GM12878 (cell line): ENCODE measurements at regions of chr1 and their contacts with region 1.

Region 1: DNA sequence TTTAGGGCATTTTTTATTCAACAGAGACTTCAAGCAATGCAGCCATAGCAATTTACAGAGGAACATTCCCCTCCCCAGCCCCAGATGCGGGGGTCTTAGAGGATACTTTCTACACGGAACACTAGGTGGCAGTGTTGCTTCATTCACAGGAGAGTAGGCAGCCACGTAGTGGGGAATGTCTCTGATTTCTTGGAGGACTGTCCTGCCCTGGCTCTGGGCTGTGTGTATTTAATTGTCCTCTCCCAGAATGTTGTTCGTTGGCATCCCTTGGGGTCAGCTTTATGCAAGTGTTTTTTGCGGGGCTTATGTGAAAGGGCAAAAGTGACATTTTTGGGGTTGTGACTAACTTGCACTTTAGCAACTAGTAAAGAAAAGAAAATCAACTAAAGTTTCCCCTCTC is 96.9 kb downstream of the PAPPA2 start:
- DNase-seq: no peak
- ATAC-seq: peak; percentile 98
- H3K4me3 ChIP-seq: no peak overlapping the region
- H3K27ac ChIP-seq: no peak overlapping the region
- H3K4me1 ChIP-seq: no peaks in the 10 kb centered on the region
- H3K27me3 ChIP-seq: 0 out of 4 replicates have a peak, but pooled peaks cover 0 to 2% of the 10 kb centered on the region in 2 experiments
- CTCF ChIP-seq: peak; percentile 75 to 82 (median 75)
- EP300 ChIP-seq: no peak
- POLR2A ChIP-seq: no peak
- RAD21 ChIP-seq: peak; percentile 85

Region 2: GRCh38 chr1:176691251-176692228 is 131.7 kb after region 1 on chr1:
- CTCF ChIA-PET with region 1: interaction called, 67 read pairs
- POLR2A ChIA-PET with region 1: no interaction called
- RAD21 ChIA-PET with region 1: interaction called, 21 read pairs
- SMC1A ChIA-PET with region 1: interaction called, 25 read pairs
- in situ Hi-C with region 1: no loop called
- intact Hi-C with region 1: loop called (anchors 1 kb)
- DNase-seq: peak; percentile 17
- ATAC-seq: peak; percentile 94
- H3K4me3 ChIP-seq: no peak overlapping the region
- H3K27ac ChIP-seq: no peak overlapping the region
- H3K4me1 ChIP-seq: no peaks in the 10 kb centered on the region
- H3K27me3 ChIP-seq: no peaks in the 10 kb centered on the region; a peak in 1 of 4 replicates
- CTCF ChIP-seq: peak; percentile 69 to 73 (median 70); a peak in 5 of 6 replicates
- EP300 ChIP-seq: no peak
- POLR2A ChIP-seq: no peak
- RAD21 ChIP-seq: peak; percentile 61

Region 3: DNA sequence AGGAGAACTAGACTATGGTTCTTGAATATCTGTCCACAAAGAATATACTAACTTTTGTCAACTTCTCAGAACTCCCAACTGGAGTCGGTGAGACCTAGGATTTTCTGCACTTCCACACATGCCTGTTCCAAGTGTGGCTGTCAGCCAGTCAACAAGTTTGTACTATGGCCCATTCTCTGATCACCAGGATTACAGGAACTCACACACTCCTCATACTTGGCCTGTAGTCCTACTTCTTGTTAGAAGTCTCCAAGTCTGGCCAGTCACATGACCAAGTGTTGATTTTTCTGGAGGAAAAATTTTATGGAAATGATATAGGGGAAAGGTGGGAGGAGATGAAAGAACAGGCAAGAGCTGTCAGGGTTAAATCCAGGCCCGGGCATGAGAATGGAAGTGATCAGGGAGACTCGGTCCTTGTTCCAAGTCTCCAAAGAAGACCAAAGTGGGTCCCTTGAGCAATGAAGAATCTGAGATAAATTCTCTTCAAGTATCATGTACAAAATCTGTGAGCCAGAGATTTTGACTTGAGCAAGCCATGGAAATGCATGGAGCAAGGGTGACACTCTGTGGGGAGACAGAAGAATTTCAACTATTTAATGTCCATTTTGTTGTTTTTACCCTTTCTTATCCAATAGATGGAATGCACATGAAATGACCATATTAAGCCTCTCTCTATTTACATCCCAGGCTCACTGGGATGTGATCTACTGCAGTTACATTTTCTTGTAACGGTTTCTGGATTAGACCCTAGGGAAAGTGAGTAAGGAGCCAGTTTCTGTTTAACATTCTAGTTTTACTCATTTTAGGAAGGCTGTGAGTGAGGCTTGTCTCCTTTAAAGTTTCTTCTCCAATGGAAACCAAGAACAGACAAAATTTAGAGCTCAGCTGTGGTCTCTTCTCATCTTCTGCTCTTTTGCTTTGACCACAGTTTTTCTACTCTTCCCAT is 283.7 kb after region 1 on chr1:
- CTCF ChIA-PET with region 1: no interaction called
- POLR2A ChIA-PET with region 1: no interaction called
- RAD21 ChIA-PET with region 1: interaction called, 4 read pairs
- SMC1A ChIA-PET with region 1: interaction called, 4 read pairs
- in situ Hi-C with region 1: no loop called
- intact Hi-C with region 1: loop called (anchors 2 kb)
- DNase-seq: no peak
- ATAC-seq: no peak
- H3K4me3 ChIP-seq: no peak overlapping the region
- H3K27ac ChIP-seq: no peak overlapping the region
- H3K4me1 ChIP-seq: no peaks in the 10 kb centered on the region
- H3K27me3 ChIP-seq: 0 out of 4 replicates have a peak, but pooled peaks cover 0 to 2% of the 10 kb centered on the region in 2 experiments
- CTCF ChIP-seq: peak; percentile 19 to 48 (median 35); a peak in 4 of 6 replicates
- EP300 ChIP-seq: no peak
- POLR2A ChIP-seq: no peak
- RAD21 ChIP-seq: peak; percentile 64

Region 4: GRCh38 chr1:176880954-176881595 is 321.2 kb after region 1 on chr1:
- CTCF ChIA-PET with region 1: interaction called, 47 read pairs
- POLR2A ChIA-PET with region 1: no interaction called
- RAD21 ChIA-PET with region 1: interaction called, 5 read pairs
- SMC1A ChIA-PET with region 1: interaction called, 9 read pairs
- in situ Hi-C with region 1: loop called (anchors 5 kb)
- intact Hi-C with region 1: loop called (anchors 1 kb)
- DNase-seq: no peak
- ATAC-seq: peak; percentile 87
- H3K4me3 ChIP-seq: no peak overlapping the region
- H3K27ac ChIP-seq: no peak overlapping the region
- H3K4me1 ChIP-seq: no peaks in the 10 kb centered on the region
- H3K27me3 ChIP-seq: peaks cover 3% of the 10 kb centered on the region in 2 experiments; a peak in 2 of 4 replicates
- CTCF ChIP-seq: peak; percentile 78 to 86 (median 82)
- EP300 ChIP-seq: no peak
- POLR2A ChIP-seq: no peak
- RAD21 ChIP-seq: peak; percentile 72